Activated CD8-positive, alpha-beta memory T cell treated with anti-CD3 and anti-CD28 coated beads, Interleukin-2, amount 10 ng/mL, durations not matched to agents 7 days and 5 days (primary cell): ENCODE measurements at regions of chr7 and their contacts with region 1.

Region 1: GRCh38 chr7:4973728-4974198 is 14.8 kb upstream of the MMD2 start:
- DNase-seq: peak; percentile 94
- ATAC-seq: peak; percentile 96
- H3K4me3 Mint-ChIP-seq: peak overlapping the region; percentile 86
- H3K27ac Mint-ChIP-seq: peak overlapping the region; percentile 89
- H3K4me1 Mint-ChIP-seq: peaks cover 9% of the 10 kb centered on the region
- H3K27me3 Mint-ChIP-seq: no peaks in the 10 kb centered on the region

Region 2: GRCh38 chr7:4245236-4246137 is 728.3 kb before region 1 on chr7:
- CTCF ChIA-PET with region 1: no interaction called
- DNase-seq: no peak
- ATAC-seq: no peak
- H3K4me3 Mint-ChIP-seq: no peak overlapping the region
- H3K27ac Mint-ChIP-seq: no peak overlapping the region
- H3K4me1 Mint-ChIP-seq: no peaks in the 10 kb centered on the region
- H3K27me3 Mint-ChIP-seq: no peaks in the 10 kb centered on the region

Region 3: GRCh38 chr7:4791738-4792536 is 181.8 kb before region 1 on chr7:
- CTCF ChIA-PET with region 1: interaction called, 11 read pairs
- DNase-seq: peak; percentile 75
- ATAC-seq: peak; percentile 79
- H3K4me3 Mint-ChIP-seq: no peak overlapping the region
- H3K27ac Mint-ChIP-seq: no peak overlapping the region
- H3K4me1 Mint-ChIP-seq: peaks cover 2% of the 10 kb centered on the region
- H3K27me3 Mint-ChIP-seq: no peaks in the 10 kb centered on the region

Region 4: DNA sequence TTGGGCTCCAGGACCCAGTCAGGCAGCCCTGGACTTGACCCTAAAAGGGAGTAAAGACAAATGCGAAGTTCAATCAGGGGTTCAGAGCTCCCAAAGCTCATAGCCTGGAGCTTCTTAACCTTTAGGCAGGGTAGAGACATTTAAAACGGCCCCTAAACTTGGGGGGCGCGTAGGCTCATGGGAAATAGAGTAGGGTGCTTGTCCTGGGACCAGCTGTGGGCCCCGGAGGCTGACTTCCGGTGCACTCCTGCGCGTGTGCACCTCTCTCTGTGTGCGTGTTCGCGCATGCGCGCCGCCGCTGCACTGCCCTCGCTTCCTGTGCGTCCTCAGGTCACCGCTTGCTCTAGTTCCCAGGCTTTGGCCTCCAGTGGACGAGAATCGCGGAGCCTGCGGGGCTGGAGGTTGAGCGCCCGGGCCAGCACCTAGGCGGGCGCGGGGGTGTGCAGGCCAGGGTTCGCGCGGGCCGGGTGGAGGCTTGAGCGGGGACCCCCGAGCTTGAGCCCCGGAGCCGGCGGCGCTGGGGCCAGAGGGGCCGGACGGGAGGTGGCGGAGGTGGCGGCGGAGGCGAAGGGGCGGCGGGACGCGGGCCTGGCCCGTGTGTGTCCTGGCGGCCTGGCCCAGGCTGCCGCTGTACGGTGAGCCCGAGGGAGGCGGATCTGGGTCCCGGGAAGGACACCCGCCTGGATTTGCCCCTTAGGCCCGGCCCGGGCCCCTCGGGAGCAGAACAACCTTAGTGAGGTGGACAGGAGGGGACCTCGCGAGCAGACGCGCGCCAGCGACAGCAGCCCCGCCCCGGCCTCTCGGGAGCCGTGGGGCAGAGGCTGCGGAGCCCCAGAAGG is 72.0 kb after region 1 on chr7 and contains the start of gene RBAK:
- CTCF ChIA-PET with region 1: interaction called, 15 read pairs
- DNase-seq: peak; percentile 96
- ATAC-seq: peak; percentile 100
- H3K4me3 Mint-ChIP-seq: peak within 1 kb of the TSS; percentile 89
- H3K27ac Mint-ChIP-seq: peak within 1 kb of the TSS; percentile 90
- H3K4me1 Mint-ChIP-seq: peaks cover 36% of the 10 kb centered on the region
- H3K27me3 Mint-ChIP-seq: no peaks in the 10 kb centered on the region
- total RNA-seq, gene RBAK: 11.0 to 11.9 TPM

Region 5: GRCh38 chr7:5088906-5089305 is 115.1 kb after region 1 on chr7:
- CTCF ChIA-PET with region 1: interaction called, 65 read pairs
- DNase-seq: no peak
- ATAC-seq: no peak
- H3K4me3 Mint-ChIP-seq: no peak overlapping the region
- H3K27ac Mint-ChIP-seq: no peak overlapping the region
- H3K4me1 Mint-ChIP-seq: peaks cover 2% of the 10 kb centered on the region
- H3K27me3 Mint-ChIP-seq: no peaks in the 10 kb centered on the region

Region 6: GRCh38 chr7:5172196-5172775 is 198.5 kb after region 1 on chr7:
- CTCF ChIA-PET with region 1: interaction called, 12 read pairs
- DNase-seq: no peak
- ATAC-seq: no peak
- H3K4me3 Mint-ChIP-seq: no peak overlapping the region
- H3K27ac Mint-ChIP-seq: no peak overlapping the region
- H3K4me1 Mint-ChIP-seq: peaks cover 14% of the 10 kb centered on the region
- H3K27me3 Mint-ChIP-seq: no peaks in the 10 kb centered on the region

Region 7: GRCh38 chr7:5218564-5219360 is 245.0 kb after region 1 on chr7:
- CTCF ChIA-PET with region 1: no interaction called
- DNase-seq: no peak
- ATAC-seq: no peak
- H3K4me3 Mint-ChIP-seq: no peak overlapping the region
- H3K27ac Mint-ChIP-seq: no peak overlapping the region
- H3K4me1 Mint-ChIP-seq: no peaks in the 10 kb centered on the region
- H3K27me3 Mint-ChIP-seq: no peaks in the 10 kb centered on the region

Region 8: GRCh38 chr7:5237286-5237685 is 263.5 kb after region 1 on chr7:
- CTCF ChIA-PET with region 1: interaction called, 11 read pairs
- DNase-seq: no peak
- ATAC-seq: no peak
- H3K4me3 Mint-ChIP-seq: no peak overlapping the region
- H3K27ac Mint-ChIP-seq: no peak overlapping the region
- H3K4me1 Mint-ChIP-seq: peaks cover 22% of the 10 kb centered on the region
- H3K27me3 Mint-ChIP-seq: peaks cover 24% of the 10 kb centered on the region